Gastrocnemius medialis (tissue), 4 donors: ENCODE measurements at regions of chr12 and their contacts with region 1.

Region 1: DNA sequence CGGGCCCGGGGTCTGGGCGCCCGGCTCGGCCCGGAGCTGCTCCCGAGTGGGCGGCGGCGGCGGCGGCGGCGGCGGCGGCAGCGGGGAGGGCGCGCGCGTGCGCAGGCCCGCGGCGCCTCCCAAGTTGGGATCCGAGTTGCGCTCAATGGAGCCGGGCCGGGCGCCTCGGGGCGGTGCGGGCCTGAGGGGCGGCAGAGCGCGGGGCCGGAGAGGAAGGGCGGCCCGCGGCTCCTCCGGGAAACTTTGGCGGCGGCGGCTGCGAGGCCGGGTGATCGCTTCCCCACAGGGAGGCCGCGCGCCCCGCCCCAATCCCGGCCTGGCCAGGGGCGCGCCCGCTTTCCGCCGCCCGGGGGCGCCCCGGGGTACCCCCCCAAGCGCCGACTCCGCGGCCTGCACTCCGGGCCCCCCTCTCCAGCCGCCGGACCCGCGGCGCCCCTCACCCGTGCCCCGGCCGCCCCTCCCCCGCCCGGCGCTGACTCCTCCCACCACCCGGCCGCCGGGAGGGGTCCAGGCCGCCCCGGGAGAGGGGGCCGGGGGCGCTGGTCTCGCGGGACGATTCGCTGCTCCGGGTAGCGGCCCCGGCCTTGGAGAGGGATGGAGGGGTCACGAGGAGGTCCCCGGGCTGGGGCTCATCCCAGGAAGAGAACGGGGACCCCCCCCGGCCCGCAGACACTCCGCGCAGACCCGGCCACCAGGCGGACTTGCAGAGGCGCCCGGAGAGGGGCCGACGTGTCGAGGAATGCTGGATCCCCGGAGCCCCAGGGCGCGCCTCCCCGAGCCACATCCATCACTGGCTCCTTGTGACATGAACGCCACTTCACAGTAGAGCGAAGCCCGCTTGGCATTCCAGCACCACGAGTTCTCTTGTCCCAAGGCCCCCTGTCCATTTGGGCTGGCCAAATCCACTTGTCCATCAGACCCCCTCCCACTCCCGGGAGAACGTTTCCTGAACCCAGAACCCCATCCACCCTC is at the start of gene RILPL1:
- DNase-seq: peak in 1 of 2 donors; percentile 47
- ATAC-seq: peak; percentile 63 to 66
- H3K4me3 ChIP-seq: peak within 1 kb of the TSS; percentile 68 to 94 (median 86)
- H3K27ac ChIP-seq: peak within 1 kb of the TSS; percentile 89 to 91 (median 90)
- H3K4me1 ChIP-seq: peaks cover 26 to 38% of the 10 kb centered on the region in 2 donors
- H3K27me3 ChIP-seq: no peaks in the 10 kb centered on the region
- CTCF ChIP-seq: peak in 4 of 5 experiments; percentile 49 to 61 (median 53)
- POLR2A ChIP-seq: peak; percentile 26 to 52
- total RNA-seq, gene RILPL1: 33.4 to 65.3 (median 40.6) TPM

Region 2: GRCh38 chr12:123388177-123388947 is 145.6 kb before region 1 on chr12:
- in situ Hi-C with region 1: no loop called
- intact Hi-C with region 1: loop called (anchors 2 kb)
- DNase-seq: peak; percentile 63 to 77
- ATAC-seq: peak; percentile 57 to 61
- H3K4me3 ChIP-seq: peak overlapping the region; percentile 63 to 74 (median 66)
- H3K27ac ChIP-seq: peak overlapping the region; percentile 86 to 96 (median 94)
- H3K4me1 ChIP-seq: peaks cover 46 to 51% of the 10 kb centered on the region in 2 donors
- H3K27me3 ChIP-seq: no peaks in the 10 kb centered on the region
- CTCF ChIP-seq: no peak
- POLR2A ChIP-seq: peak in 1 of 2 donors; percentile 8

Region 3: GRCh38 chr12:123457980-123458783 is 75.8 kb before region 1 on chr12 and contains the start of gene SNRNP35:
- in situ Hi-C with region 1: no loop called
- intact Hi-C with region 1: loop called (anchors 5 kb)
- DNase-seq: peak; percentile 48 to 71
- ATAC-seq: peak; percentile 86
- H3K4me3 ChIP-seq: peak within 1 kb of the TSS; percentile 63 to 98 (median 89)
- H3K27ac ChIP-seq: peak within 1 kb of the TSS; percentile 86 to 99 (median 98)
- H3K4me1 ChIP-seq: peaks cover 8 to 12% of the 10 kb centered on the region in 2 donors
- H3K27me3 ChIP-seq: no peaks in the 10 kb centered on the region
- CTCF ChIP-seq: no peak
- POLR2A ChIP-seq: peak; percentile 51 to 55
- total RNA-seq, gene SNRNP35: 22.6 to 40.4 (median 23.5) TPM

Region 4: DNA sequence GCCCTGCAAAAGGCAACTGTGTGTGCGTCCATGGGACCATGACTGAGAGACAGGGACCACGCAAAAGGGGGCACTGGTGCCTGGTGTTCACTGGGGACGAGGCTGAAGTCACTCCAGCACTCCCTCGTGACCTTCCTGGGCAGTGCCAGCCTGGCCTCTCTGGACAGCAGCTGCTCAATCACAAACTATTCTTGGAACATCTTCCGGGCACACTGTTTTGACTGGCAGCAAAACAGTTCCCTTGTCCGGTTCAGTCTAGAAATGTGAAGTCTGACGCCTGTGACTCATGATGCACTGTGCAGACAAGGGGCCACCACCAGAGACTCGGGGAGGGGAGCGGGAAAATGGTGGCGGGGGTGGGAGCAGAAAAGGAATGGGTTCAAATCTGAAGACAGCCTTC is 55.2 kb before region 1 on chr12:
- in situ Hi-C with region 1: no loop called
- intact Hi-C with region 1: loop called (anchors 5 kb)
- DNase-seq: peak; percentile 91 to 95
- ATAC-seq: peak; percentile 83 to 87
- H3K4me3 ChIP-seq: peak overlapping the region; percentile 17 to 45 (median 30)
- H3K27ac ChIP-seq: peak overlapping the region; percentile 96 to 99 (median 98)
- H3K4me1 ChIP-seq: peaks cover 38 to 48% of the 10 kb centered on the region in 2 donors
- H3K27me3 ChIP-seq: no peaks in the 10 kb centered on the region
- CTCF ChIP-seq: peak in 1 of 5 experiments; percentile 10
- POLR2A ChIP-seq: peak; percentile 26 to 47

Region 5: GRCh38 chr12:123580772-123581171 is 46.8 kb after region 1 on chr12:
- in situ Hi-C with region 1: no loop called
- intact Hi-C with region 1: loop called (anchors 1 kb)
- DNase-seq: no peak
- ATAC-seq: no peak
- H3K4me3 ChIP-seq: no peak overlapping the region
- H3K27ac ChIP-seq: peak overlapping the region in 2 of 4 donors; percentile 28 to 95
- H3K4me1 ChIP-seq: peaks cover 23 to 28% of the 10 kb centered on the region in 2 donors
- H3K27me3 ChIP-seq: no peaks in the 10 kb centered on the region
- CTCF ChIP-seq: no peak
- POLR2A ChIP-seq: no peak

Region 6: DNA sequence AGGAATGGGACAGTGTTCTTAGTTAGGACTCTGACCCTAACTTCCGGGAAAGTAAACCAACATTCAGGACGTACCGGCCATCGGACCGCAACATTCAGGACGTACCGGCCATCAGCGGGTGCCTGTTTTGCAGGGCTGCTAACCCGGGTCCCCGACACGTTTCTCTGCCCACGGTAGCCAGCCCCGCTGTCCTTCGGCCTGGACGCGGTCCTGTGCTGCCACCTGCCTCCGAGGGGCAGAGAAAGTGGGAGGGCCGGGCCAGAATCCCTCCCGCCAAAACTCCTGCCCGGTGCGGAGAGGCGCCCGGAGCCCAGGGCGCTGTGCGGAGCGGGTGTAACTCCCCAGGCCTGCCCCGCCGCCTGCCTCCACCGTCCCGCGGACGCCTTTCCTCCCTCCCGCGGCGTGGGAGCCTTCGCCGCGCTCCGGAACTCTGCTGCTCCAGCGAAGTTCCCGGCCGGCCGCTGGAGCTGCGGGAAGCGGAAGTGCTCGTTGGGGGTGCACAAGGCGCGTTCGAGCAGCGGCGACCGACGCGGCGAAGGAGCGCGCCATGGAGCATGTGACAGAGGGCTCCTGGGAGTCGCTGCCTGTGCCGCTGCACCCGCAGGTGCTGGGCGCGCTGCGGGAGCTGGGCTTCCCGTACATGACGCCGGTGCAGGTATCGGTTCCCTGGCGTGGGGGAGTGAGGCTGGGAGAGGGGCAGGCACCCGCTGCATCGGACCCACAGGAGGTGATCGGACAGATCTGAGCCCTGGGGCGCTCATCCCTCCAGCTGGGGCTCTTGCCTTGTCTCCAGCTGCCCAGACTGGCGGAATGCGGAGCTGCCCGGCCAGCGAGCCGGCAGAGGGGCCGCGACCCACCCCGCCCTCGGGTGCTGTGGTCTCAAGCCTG is 67.9 kb after region 1 on chr12 and contains the start of gene DDX55:
- in situ Hi-C with region 1: no loop called
- intact Hi-C with region 1: loop called (anchors 5 kb)
- DNase-seq: peak; percentile 77 to 79
- ATAC-seq: peak; percentile 96 to 98
- H3K4me3 ChIP-seq: peak within 1 kb of the TSS; percentile 85 to 95 (median 94)
- H3K27ac ChIP-seq: peak within 1 kb of the TSS; percentile 79 to 93 (median 86)
- H3K4me1 ChIP-seq: peaks cover 20 to 21% of the 10 kb centered on the region in 2 donors
- H3K27me3 ChIP-seq: no peaks in the 10 kb centered on the region
- CTCF ChIP-seq: peak; percentile 70 to 89 (median 81)
- POLR2A ChIP-seq: peak; percentile 39 to 75
- total RNA-seq, gene DDX55: 6.2 to 9.4 (median 7.4) TPM